Ascending aorta (tissue), 2 donors: ENCODE measurements at regions of chr20 and their contacts with region 1.

Region 1: GRCh38 chr20:49610701-49611538 is 43.0 kb upstream of the PTGIS start:
- DNase-seq: no peak
- H3K4me3 ChIP-seq: peak overlapping the region; percentile 13 to 35
- H3K27ac ChIP-seq: no peak overlapping the region
- H3K4me1 ChIP-seq: peaks cover 0 to 11% of the 10 kb centered on the region in 2 donors
- H3K27me3 ChIP-seq: no peaks in the 10 kb centered on the region
- CTCF ChIP-seq: peak; percentile 99 to 100 (median 100)

Region 2: DNA sequence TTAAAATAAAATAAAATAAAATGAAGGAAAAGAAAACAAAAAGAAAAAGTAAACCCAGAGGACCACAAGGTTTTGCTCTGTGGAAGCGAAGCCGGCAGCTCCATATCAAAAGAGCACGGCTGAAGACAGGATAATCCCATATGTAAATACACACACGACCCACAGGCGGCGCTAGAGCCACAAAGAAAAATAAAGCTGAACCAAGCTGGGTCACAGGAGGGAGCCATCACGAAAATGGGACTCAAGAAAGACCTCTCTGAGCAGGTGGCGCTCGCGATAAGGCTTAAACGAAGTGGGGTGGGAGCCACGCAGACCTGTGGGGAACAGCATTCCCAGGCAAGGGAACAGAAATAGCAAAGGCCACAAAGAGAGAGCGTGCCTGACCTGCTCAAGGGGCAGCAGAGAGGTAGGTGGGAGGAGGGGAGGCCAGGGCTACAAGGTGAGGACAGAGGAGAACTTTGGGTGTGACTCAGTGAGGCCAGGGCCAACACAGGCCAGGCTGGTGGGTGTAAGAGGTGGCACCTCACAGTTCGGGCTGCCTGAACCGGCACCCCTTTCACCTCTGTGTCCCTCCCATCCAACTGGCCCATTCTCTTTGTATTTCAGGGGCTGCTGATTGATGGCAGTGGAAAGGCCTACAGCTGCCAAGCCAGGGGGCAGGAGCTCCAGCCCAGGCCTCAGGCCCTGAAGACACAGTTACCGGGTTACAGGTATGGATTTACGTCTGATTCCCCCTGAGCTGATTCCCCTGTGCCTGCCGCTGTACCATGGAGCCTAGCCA is 69.0 kb before region 1 on chr20:
- intact Hi-C with region 1: loop called (anchors 1 kb)
- DNase-seq: peak in 1 of 2 donors; percentile 84
- H3K4me3 ChIP-seq: no peak overlapping the region
- H3K27ac ChIP-seq: peak overlapping the region; percentile 73 to 84
- H3K4me1 ChIP-seq: peaks cover 0 to 15% of the 10 kb centered on the region in 2 donors
- H3K27me3 ChIP-seq: no peaks in the 10 kb centered on the region
- CTCF ChIP-seq: peak; percentile 91 to 96 (median 92)

Region 3: DNA sequence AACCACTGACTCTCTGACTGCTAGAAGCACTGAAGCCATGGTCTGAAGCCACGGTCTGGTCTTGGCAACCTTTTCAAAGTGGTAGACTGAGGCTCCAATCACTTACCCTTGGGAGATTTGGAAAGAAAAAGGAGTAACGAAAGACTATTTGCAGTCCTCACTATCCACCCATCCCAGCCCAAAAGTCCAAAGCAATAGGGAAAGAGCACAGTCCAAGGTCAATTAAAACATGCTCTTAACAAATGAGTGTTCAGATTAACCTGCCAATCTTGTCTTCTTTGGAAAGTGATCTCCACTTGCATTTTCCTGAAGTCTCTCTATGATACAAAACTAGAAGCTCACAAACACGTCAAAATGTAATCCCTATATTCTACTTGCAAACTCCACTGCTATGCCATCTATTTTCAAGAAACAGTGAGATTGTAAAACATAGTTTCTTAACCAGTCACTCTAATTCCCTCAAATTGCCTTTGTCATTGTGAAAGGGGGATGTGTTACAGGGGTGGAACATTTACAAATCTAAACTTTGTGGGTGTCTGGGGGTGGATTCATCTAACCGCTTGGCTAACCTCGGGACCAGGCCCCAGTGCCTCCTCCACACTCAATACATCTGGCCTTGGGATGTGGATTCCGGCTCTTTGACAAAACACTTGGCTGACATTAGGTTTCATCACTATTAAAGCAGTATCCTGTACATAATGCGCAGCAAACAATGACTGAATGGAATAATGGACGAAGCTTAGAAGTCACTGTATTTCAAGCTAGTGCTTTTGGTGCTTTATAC is 46.4 kb after region 1 on chr20:
- intact Hi-C with region 1: no loop called
- DNase-seq: no peak
- H3K4me3 ChIP-seq: no peak overlapping the region
- H3K27ac ChIP-seq: peak overlapping the region; percentile 23 to 46
- H3K4me1 ChIP-seq: peaks cover 0 to 8% of the 10 kb centered on the region in 2 donors
- H3K27me3 ChIP-seq: no peaks in the 10 kb centered on the region
- CTCF ChIP-seq: no peak

Region 4: GRCh38 chr20:49821870-49822331 is 211.0 kb after region 1 on chr20:
- intact Hi-C with region 1: loop called (anchors 5 kb)
- DNase-seq: no peak
- H3K4me3 ChIP-seq: no peak overlapping the region
- H3K27ac ChIP-seq: peak overlapping the region in 1 of 2 donors; percentile 3
- H3K4me1 ChIP-seq: peaks cover 3 to 19% of the 10 kb centered on the region in 2 donors
- H3K27me3 ChIP-seq: no peaks in the 10 kb centered on the region
- CTCF ChIP-seq: peak; percentile 11 to 44 (median 24)

Region 5: GRCh38 chr20:49888345-49888966 is 277.5 kb after region 1 on chr20:
- intact Hi-C with region 1: loop called (anchors 1 kb)
- DNase-seq: no peak
- H3K4me3 ChIP-seq: no peak overlapping the region
- H3K27ac ChIP-seq: peak overlapping the region; percentile 79 to 84
- H3K4me1 ChIP-seq: peaks cover 16 to 33% of the 10 kb centered on the region in 2 donors
- H3K27me3 ChIP-seq: no peaks in the 10 kb centered on the region
- CTCF ChIP-seq: peak; percentile 68 to 84 (median 81)